ENCODE measurements at regions of chr2 and their contacts with region 1.

Region 1: DNA sequence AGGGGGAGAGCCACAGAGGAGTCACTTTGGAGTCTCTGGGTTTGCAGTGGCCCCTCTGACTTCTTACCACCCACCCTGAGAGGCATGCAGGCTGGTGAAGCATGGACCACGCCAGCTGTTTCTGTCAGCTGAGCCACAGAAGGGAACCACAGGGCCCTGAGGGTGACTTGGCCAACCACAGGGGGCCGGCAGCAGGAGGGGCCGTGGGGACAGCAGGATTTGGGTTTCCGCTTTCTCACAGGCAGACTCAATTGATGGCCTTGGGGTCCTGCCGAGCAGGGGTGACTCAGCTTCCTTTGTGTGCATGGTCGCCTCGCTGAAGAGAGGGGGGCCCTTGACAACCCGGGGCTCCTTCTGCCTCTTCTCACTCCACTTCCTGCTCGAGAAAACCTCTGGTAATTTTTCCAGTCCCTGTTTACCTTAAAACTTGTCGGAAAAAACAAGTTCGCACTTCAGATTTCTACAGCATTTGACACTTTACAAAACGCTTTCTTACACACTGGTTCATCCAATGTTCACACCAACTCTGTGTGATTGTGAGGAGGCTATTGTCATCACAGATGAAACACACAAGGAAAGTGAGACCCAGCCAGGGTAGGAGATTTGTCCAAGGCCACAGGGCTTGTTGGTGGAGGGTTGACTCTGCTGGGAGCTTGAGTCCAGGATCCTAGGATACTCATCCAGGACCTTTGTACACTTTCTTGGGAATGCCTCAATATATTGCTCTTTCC is 311.2 kb downstream of the LPIN1 start:
- DNase-seq: peak in 1 of 4 experiments; percentile 20
- ATAC-seq: no peak
- H3K4me3 ChIP-seq: no peak overlapping the region
- H3K27ac ChIP-seq: no peak overlapping the region
- H3K4me1 ChIP-seq: peaks cover 10 to 47% of the 10 kb centered on the region in 2 experiments
- H3K27me3 ChIP-seq: no peaks in the 10 kb centered on the region
- CTCF ChIP-seq: no peak
- EP300 ChIP-seq: no peak
- POLR2A ChIP-seq: no peak
- RAD21 ChIP-seq: no peak

Region 2: GRCh38 chr2:12270876-12271588 is 213.4 kb after region 1 on chr2:
- CTCF ChIA-PET with region 1: no interaction called
- POLR2A ChIA-PET with region 1: no interaction called
- in situ Hi-C with region 1: no loop called
- intact Hi-C with region 1: loop called (anchors 10 kb)
- DNase-seq: no peak
- ATAC-seq: peak; percentile 26
- H3K4me3 ChIP-seq: no peak overlapping the region
- H3K27ac ChIP-seq: no peak overlapping the region
- H3K4me1 ChIP-seq: peaks cover 0 to 2% of the 10 kb centered on the region in 2 experiments; a peak in 2 of 5 replicates
- H3K27me3 ChIP-seq: no peaks in the 10 kb centered on the region
- CTCF ChIP-seq: no peak
- EP300 ChIP-seq: no peak
- POLR2A ChIP-seq: no peak
- RAD21 ChIP-seq: no peak